ENCODE measurements at regions of chr4 and their contacts with region 1.

Region 1: DNA sequence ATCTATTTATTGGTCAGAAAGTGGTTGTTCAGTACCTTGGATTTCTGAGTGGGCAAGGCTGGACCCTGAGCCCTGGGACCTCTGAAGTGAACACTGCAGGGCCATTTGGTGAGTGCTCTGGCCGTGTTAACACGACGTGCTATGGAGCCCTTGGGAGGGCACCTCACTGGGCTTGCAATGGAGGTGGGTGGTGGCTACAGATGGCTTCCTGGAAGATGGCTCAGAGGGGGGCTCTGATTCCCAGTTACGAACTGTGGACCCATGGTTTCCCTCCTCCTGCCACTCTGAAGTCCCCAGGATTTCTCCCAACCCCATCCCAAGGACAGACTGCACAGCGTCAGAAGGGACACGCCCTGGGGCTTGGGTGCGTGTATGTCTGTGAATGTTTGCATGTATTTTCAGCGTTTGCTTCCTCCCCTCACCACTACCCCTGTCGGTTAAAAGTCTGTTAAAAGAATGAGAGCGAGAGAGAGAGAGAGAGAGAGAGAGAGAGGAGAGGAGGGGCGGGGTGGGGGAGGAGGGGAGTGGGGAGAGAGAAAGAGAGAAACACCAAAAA is 3.7 kb upstream of the RHOH start:
- DNase-seq: no peak
- ATAC-seq: peak; percentile 28
- H3K4me3 Mint-ChIP-seq: peak overlapping the region; percentile 97
- H3K27ac Mint-ChIP-seq: peak overlapping the region; percentile 95
- H3K4me1 Mint-ChIP-seq: peaks cover 83% of the 10 kb centered on the region
- H3K27me3 Mint-ChIP-seq: no peaks in the 10 kb centered on the region
- CTCF ChIP-seq: no peak

Region 2: DNA sequence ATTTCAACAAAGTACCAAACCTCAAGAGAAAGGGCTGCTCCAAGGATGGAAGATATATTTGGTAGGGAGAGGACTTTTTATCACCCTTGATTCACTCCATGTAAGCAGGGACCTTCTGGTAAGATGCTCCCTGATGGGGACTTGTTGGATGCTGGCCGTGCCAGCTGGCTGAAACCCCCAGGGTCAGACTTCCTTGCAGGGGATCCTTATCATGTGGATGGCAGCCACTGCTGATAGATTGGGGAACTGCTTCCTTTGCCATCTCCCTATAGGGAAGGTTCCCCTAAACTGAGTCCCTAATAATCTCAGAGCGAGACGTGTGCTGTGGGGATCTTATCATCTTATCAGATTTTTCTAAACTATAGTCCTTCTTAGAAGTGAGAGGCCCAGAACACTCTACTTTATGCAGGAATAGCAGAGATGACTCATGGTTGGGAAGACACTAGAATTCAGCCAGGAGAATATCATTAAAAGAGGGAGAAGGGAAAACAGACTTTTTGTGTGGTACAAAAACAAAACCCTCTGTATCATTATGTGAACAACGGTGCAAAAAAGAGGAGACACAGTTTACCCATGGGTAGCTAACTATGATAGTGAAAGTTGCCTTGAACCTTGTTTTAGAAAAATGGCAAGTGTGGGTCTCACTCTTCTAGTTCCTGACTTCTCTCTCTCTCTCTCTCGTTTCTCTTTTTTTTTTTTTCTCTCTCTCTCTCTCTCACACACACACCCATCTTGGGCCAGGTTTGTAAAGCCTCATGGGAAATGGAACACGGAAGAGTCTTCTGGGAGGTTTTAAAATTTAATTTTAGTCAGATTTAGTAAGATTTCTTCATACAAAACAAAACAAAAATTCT is 19.8 kb after region 1 on chr4:
- CTCF ChIA-PET with region 1: interaction called, 3 read pairs
- POLR2A ChIA-PET with region 1: interaction called, 50 read pairs
- intact Hi-C with region 1: no loop called
- DNase-seq: no peak
- ATAC-seq: no peak
- H3K4me3 Mint-ChIP-seq: peak overlapping the region; percentile 42
- H3K27ac Mint-ChIP-seq: peak overlapping the region; percentile 80
- H3K4me1 Mint-ChIP-seq: peaks cover 96% of the 10 kb centered on the region
- H3K27me3 Mint-ChIP-seq: no peaks in the 10 kb centered on the region
- CTCF ChIP-seq: no peak

Region 3: GRCh38 chr4:40525811-40526598 is 332.9 kb after region 1 on chr4:
- CTCF ChIA-PET with region 1: no interaction called
- POLR2A ChIA-PET with region 1: no interaction called
- intact Hi-C with region 1: no loop called
- DNase-seq: no peak
- ATAC-seq: no peak
- H3K4me3 Mint-ChIP-seq: no peak overlapping the region
- H3K27ac Mint-ChIP-seq: no peak overlapping the region
- H3K4me1 Mint-ChIP-seq: peaks cover 10% of the 10 kb centered on the region
- H3K27me3 Mint-ChIP-seq: no peaks in the 10 kb centered on the region
- CTCF ChIP-seq: no peak

Region 4: GRCh38 chr4:41763725-41764124 is 1570.6 kb after region 1 on chr4:
- CTCF ChIA-PET with region 1: no interaction called
- POLR2A ChIA-PET with region 1: no interaction called
- intact Hi-C with region 1: no loop called
- DNase-seq: no peak
- ATAC-seq: no peak
- H3K4me3 Mint-ChIP-seq: no peak overlapping the region
- H3K27ac Mint-ChIP-seq: no peak overlapping the region
- H3K4me1 Mint-ChIP-seq: no peaks in the 10 kb centered on the region
- H3K27me3 Mint-ChIP-seq: peaks cover 20% of the 10 kb centered on the region
- CTCF ChIP-seq: no peak

Measured in activated B cell treated with CpG ODN at 0.5 μM for 24 hours (primary cell).